Activated CD4-positive, alpha-beta T cell treated with anti-CD3 and anti-CD28 coated beads for 36 hours (primary cell): ENCODE measurements at regions of chr22 and their contacts with region 1.

Region 1: GRCh38 chr22:37608477-37609239 is at the start of gene GGA1:
- DNase-seq: peak; percentile 99
- ATAC-seq: peak; percentile 82
- H3K4me3 Mint-ChIP-seq: peak within 1 kb of the TSS; percentile 89
- H3K27ac Mint-ChIP-seq: peak within 1 kb of the TSS; percentile 99
- H3K4me1 Mint-ChIP-seq: peaks cover 51% of the 10 kb centered on the region
- H3K27me3 Mint-ChIP-seq: no peaks in the 10 kb centered on the region
- total RNA-seq, gene GGA1: 55.4 to 66.6 TPM

Region 2: DNA sequence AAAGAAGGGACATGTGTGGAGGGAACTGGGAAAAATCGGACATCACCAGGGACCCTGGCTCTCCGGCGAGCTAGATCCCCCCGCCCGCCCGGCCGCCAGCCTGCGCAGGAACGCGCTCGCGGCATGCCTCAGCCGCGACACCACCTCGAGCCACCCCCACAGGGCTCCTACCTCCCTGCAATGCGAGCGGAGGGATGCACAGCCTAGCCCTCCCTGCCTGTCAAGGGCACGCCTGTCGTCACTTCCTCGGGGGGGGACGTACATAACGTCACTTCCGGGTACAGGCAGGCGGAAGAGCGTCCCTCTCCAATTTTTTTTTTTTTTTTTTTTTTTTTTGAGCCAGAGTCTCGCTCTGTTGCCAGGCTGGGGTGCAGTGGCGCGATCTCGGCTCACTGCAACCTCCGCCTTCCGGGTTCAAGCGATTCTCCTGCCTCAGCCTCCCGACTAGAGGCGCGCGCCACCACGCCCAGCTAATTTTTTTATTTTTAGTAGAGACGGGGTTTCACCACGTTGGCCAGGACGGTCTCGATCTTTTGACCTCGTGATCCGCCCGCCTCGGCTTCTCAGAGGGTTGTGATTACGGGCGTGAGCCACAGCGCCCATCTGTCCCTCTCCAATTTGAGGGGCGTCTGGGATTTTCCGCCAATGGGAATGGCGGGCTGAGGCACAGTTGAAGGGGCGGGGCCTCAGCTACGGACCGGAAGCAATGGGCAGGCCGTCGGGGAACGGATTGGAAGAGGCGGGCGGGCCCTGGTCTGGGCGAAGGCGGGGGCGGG is 1127.1 kb before region 1 on chr22 and contains the start of gene TXN2:
- CTCF ChIA-PET with region 1: no interaction called
- POLR2A ChIA-PET with region 1: no interaction called
- intact Hi-C with region 1: loop called in 1 of 2 experiments (anchors 5 kb)
- DNase-seq: peak; percentile 97
- ATAC-seq: peak; percentile 89
- H3K4me3 Mint-ChIP-seq: peak within 1 kb of the TSS; percentile 81
- H3K27ac Mint-ChIP-seq: peak within 1 kb of the TSS; percentile 94
- H3K4me1 Mint-ChIP-seq: peaks cover 19% of the 10 kb centered on the region
- H3K27me3 Mint-ChIP-seq: no peaks in the 10 kb centered on the region
- total RNA-seq, gene TXN2: 95.5 to 99.1 TPM

Region 3: DNA sequence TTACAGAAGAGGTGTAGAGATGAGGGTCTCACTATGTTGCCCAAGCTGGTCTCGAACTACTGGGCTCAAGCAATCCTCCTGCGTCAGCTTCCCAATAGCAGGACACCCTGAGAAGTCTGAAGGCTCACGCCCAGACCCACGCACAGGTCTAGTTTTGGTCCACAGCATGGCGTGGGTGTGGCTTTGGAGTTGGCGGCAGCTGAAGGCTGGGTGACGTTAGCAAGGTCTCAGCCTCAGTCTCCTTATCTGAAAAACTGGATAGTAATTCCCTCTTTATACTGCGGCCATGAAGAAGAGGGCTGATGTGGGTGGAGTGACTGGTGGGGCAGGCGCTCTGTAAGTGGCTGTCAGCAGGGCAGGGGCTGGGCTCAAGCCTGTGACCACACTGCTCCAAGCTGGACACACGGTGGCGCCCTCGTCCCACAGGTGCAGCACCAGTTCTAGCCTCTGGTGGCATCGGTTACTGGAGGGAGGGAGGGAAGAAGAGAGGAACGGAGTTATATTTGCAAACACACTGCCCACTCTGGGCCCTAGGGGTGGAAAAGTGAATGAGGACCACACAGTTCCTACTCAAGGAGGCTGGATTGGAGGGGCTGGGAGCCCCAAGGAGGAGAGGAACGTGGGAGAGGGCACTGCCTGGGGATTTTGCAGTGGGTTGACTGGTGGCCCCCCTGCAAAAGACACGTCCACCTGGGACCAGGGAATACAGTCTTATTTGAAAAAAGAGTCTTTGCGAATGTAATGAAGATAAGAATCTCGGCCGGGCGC is 69.9 kb before region 1 on chr22:
- CTCF ChIA-PET with region 1: interaction called, 12 read pairs
- POLR2A ChIA-PET with region 1: interaction called, 3 read pairs
- intact Hi-C with region 1: no loop called
- DNase-seq: peak; percentile 97
- ATAC-seq: peak; percentile 92
- H3K4me3 Mint-ChIP-seq: no peak overlapping the region
- H3K27ac Mint-ChIP-seq: peak overlapping the region; percentile 55
- H3K4me1 Mint-ChIP-seq: peaks cover 39% of the 10 kb centered on the region
- H3K27me3 Mint-ChIP-seq: peaks cover 12% of the 10 kb centered on the region

Region 4: GRCh38 chr22:37633625-37634416 is 25.2 kb after region 1 on chr22:
- CTCF ChIA-PET with region 1: interaction called, 17 read pairs
- POLR2A ChIA-PET with region 1: interaction called, 6 read pairs
- intact Hi-C with region 1: loop called (anchors 1 to 2 kb)
- DNase-seq: peak; percentile 86
- ATAC-seq: peak; percentile 70
- H3K4me3 Mint-ChIP-seq: peak overlapping the region; percentile 58
- H3K27ac Mint-ChIP-seq: peak overlapping the region; percentile 93
- H3K4me1 Mint-ChIP-seq: peaks cover 56% of the 10 kb centered on the region
- H3K27me3 Mint-ChIP-seq: no peaks in the 10 kb centered on the region

Region 5: GRCh38 chr22:37686002-37686982 is 77.6 kb after region 1 on chr22 and contains the start of gene NOL12:
- CTCF ChIA-PET with region 1: interaction called, 11 read pairs
- POLR2A ChIA-PET with region 1: no interaction called
- intact Hi-C with region 1: loop called in 1 of 2 experiments (anchors 1 kb)
- DNase-seq: peak; percentile 84
- ATAC-seq: peak; percentile 82
- H3K4me3 Mint-ChIP-seq: peak within 1 kb of the TSS; percentile 90
- H3K27ac Mint-ChIP-seq: peak within 1 kb of the TSS; percentile 98
- H3K4me1 Mint-ChIP-seq: peaks cover 27% of the 10 kb centered on the region
- H3K27me3 Mint-ChIP-seq: no peaks in the 10 kb centered on the region
- total RNA-seq, gene NOL12: 37.1 to 42.3 TPM

Region 6: DNA sequence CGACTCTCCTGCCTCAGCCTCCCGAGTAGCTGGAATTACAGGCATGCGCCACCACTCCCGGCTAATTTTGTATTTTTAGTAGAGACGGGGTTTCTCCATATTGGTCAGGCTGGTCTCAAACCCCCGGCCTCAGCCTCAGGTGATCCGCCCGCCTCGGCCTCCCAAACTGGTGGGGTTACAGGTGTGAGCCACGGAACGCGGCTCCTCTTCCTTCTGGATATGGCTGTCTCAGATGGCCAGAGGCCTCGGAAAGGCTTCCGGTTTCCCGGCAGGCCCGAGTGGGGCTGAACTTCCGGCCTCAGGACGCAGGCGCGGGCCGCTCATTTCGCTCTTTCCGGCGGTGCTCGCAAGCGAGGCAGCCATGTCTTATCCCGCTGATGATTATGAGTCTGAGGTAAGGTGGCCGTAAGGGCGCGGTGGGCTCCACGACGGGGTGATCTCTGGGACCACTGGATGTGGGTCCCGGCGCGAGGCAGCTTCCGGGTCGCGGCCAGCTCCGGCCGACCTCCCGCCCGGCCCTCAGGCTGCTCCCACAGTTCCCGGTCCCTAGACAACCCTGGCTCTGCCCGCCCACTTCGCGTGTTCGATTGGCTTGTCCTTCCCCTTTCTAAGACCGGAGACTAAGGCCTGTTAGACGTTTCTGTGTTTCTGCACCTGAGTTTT is 240.6 kb after region 1 on chr22 and contains the start of gene EIF3L:
- CTCF ChIA-PET with region 1: interaction called, 5 read pairs
- POLR2A ChIA-PET with region 1: no interaction called
- intact Hi-C with region 1: loop called in 1 of 2 experiments (anchors 1 kb)
- DNase-seq: peak; percentile 94
- ATAC-seq: peak; percentile 74
- H3K4me3 Mint-ChIP-seq: peak within 1 kb of the TSS; percentile 90
- H3K27ac Mint-ChIP-seq: peak within 1 kb of the TSS; percentile 96
- H3K4me1 Mint-ChIP-seq: peaks cover 47% of the 10 kb centered on the region
- H3K27me3 Mint-ChIP-seq: no peaks in the 10 kb centered on the region
- total RNA-seq, gene EIF3L: 632 to 670 TPM

Region 7: GRCh38 chr22:38705235-38706100 is 1096.8 kb after region 1 on chr22 and contains the start of gene GTPBP1:
- CTCF ChIA-PET with region 1: no interaction called
- POLR2A ChIA-PET with region 1: no interaction called
- intact Hi-C with region 1: loop called in 1 of 2 experiments (anchors 2 kb)
- DNase-seq: peak; percentile 98
- ATAC-seq: peak; percentile 89
- H3K4me3 Mint-ChIP-seq: peak within 1 kb of the TSS; percentile 93
- H3K27ac Mint-ChIP-seq: peak within 1 kb of the TSS; percentile 97
- H3K4me1 Mint-ChIP-seq: peaks cover 53% of the 10 kb centered on the region
- H3K27me3 Mint-ChIP-seq: no peaks in the 10 kb centered on the region
- total RNA-seq, gene GTPBP1: 88.6 to 92.8 TPM